ENCODE measurements at regions of chr14 and their contacts with region 1.

Region 1: GRCh38 chr14:75307700-75308379 is 29.2 kb downstream of the FOS start:
- DNase-seq: no peak
- H3K4me3 ChIP-seq: no peak overlapping the region
- CTCF ChIP-seq: peak; percentile 93

Region 2: DNA sequence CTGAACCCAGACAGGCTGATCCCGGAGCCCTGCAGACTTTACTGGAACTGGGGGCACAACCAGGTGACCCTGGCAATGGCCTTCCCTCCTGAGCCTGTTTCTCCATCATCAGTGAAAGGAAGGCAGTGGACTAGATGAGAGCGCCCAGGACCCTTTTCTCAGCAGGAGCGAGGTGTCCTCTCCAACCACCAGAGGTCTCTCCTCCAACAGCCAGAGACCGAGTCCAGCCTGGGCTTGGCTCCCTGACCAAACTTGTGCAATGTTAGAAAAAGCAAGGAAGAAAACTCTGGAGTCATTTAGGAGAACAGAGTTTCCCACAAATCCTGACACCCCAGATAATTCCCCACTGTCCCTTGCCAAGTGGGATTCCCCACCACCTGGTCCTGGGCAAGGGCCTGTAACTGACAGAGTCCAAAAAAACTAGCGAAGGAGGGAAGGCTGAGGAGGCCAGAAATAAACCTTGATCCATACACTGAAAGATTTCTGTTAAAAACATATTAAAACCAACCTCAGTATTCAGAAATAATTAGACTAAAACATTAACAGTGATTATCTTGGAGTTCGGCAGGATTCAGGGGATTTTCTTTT is 393.8 kb before region 1 on chr14:
- CTCF ChIA-PET with region 1: interaction called, 11 read pairs
- POLR2A ChIA-PET with region 1: no interaction called
- DNase-seq: no peak
- H3K4me3 ChIP-seq: no peak overlapping the region
- CTCF ChIP-seq: peak; percentile 95

Region 3: GRCh38 chr14:75247286-75247922 is 60.4 kb before region 1 on chr14:
- CTCF ChIA-PET with region 1: no interaction called
- POLR2A ChIA-PET with region 1: no interaction called
- DNase-seq: no peak
- H3K4me3 ChIP-seq: no peak overlapping the region
- CTCF ChIP-seq: no peak

Region 4: GRCh38 chr14:75258615-75259466 is 49.0 kb before region 1 on chr14:
- CTCF ChIA-PET with region 1: no interaction called
- POLR2A ChIA-PET with region 1: no interaction called
- DNase-seq: peak; percentile 98
- H3K4me3 ChIP-seq: peak overlapping the region; percentile 57
- CTCF ChIP-seq: no peak

Region 5: GRCh38 chr14:75323571-75323970 is 15.7 kb after region 1 on chr14:
- CTCF ChIA-PET with region 1: interaction called, 19 read pairs
- POLR2A ChIA-PET with region 1: no interaction called
- DNase-seq: no peak
- H3K4me3 ChIP-seq: no peak overlapping the region
- CTCF ChIP-seq: no peak

Region 6: DNA sequence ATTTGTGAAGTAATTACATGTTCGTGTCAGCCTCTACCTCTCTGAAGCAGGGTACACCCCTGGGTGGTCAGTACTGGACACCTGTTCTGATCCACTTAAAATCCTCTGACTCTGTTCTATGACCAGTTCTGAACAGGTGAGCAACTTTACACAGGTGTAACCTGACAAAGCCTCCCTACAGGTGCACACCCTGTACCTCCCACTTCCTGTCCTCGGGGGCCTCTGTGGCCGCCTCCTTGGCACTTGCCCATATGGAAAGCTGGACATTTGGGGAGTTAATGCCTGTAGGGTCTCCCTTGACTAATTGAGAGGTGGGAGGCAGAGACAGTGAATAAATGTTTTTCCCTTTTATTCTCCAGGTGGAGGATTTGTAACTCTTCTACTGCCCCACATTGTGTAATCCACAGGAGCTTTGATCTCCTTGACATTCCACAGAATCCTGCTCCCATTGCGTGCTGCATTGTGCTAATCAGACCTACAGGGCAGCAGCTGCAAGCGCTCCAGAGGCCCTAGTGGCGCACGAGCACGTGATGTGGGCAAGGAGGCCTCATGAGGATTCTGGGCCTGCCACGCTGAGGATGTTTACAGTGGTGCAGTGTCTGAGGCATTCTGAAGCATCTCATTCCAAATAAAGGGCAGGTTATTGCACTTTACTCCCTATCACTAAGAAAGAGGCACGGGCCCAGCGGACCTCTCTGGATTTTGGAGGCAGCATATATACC is 168.6 kb after region 1 on chr14:
- CTCF ChIA-PET with region 1: interaction called, 18 read pairs
- POLR2A ChIA-PET with region 1: no interaction called
- DNase-seq: no peak
- H3K4me3 ChIP-seq: no peak overlapping the region
- CTCF ChIP-seq: no peak

Region 7: DNA sequence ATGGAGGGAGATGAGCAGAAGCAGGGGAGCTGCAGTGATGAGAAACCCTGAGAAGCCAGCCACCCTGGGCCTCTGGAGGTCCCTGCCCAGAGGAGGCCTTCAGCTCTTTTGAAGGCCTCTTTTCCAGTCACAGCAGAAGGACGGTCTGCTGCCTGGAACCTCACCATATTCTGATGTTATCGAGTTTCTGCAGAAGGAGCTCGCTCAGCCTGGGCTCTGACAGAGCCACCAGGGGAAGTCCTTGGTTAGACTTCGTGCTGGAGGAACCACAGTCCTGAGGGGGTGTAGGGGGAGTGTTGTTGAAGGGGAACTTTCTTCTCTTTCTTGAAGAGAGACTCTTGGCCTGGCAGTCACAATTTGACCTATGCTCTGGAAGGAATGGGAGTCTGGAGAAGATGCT is 189.4 kb after region 1 on chr14:
- CTCF ChIA-PET with region 1: interaction called, 412 read pairs
- POLR2A ChIA-PET with region 1: no interaction called
- DNase-seq: no peak
- H3K4me3 ChIP-seq: no peak overlapping the region
- CTCF ChIP-seq: no peak

Measured in AG04449 (cell line).